HCT116 (cell line): ENCODE measurements at regions of chr4 and their contacts with region 1.

Region 1: GRCh38 chr4:108492816-108493595 is 127.4 kb upstream of the RPL34 start:
- DNase-seq: peak; percentile 21
- ATAC-seq: peak; percentile 100
- H3K4me3 ChIP-seq: no peak overlapping the region
- H3K27ac ChIP-seq: no peak overlapping the region
- H3K4me1 ChIP-seq: no peaks in the 10 kb centered on the region
- H3K27me3 ChIP-seq: no peaks in the 10 kb centered on the region
- CTCF ChIP-seq: peak; percentile 35 to 75 (median 73); a peak in 5 of 6 replicates
- POLR2A ChIP-seq: no peak
- RAD21 ChIP-seq: peak; percentile 69

Region 2: DNA sequence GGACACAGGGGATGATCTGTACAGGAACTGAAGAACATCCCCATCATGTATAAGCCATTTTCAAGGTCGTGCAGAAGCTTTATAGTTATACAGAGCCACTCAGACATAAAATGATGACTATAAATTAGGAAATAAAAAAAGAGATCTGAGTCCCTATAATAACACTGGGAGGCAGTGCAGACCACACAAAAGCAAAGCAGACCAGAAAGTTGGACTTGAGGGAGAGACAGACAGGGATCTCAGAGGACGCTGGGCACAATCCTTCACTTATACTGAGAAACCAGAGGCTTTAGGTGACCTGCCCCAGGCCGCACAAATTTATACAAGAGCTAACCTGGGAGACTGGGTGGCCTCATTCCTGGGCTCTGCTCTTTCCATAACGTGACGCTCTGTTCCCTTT is 432.8 kb before region 1 on chr4:
- CTCF ChIA-PET with region 1: interaction called, 3 read pairs
- POLR2A ChIA-PET with region 1: no interaction called
- RAD21 ChIA-PET with region 1: no interaction called
- intact Hi-C with region 1: loop called (anchors 1 kb)
- DNase-seq: peak; percentile 41
- ATAC-seq: peak; percentile 66
- H3K4me3 ChIP-seq: no peak overlapping the region
- H3K27ac ChIP-seq: no peak overlapping the region
- H3K4me1 ChIP-seq: peaks cover 0 to 22% of the 10 kb centered on the region in 2 experiments; a peak in 2 of 4 replicates
- H3K27me3 ChIP-seq: no peaks in the 10 kb centered on the region
- CTCF ChIP-seq: peak; percentile 32 to 57 (median 42); a peak in 4 of 6 replicates
- POLR2A ChIP-seq: no peak
- RAD21 ChIP-seq: peak; percentile 82

Region 3: DNA sequence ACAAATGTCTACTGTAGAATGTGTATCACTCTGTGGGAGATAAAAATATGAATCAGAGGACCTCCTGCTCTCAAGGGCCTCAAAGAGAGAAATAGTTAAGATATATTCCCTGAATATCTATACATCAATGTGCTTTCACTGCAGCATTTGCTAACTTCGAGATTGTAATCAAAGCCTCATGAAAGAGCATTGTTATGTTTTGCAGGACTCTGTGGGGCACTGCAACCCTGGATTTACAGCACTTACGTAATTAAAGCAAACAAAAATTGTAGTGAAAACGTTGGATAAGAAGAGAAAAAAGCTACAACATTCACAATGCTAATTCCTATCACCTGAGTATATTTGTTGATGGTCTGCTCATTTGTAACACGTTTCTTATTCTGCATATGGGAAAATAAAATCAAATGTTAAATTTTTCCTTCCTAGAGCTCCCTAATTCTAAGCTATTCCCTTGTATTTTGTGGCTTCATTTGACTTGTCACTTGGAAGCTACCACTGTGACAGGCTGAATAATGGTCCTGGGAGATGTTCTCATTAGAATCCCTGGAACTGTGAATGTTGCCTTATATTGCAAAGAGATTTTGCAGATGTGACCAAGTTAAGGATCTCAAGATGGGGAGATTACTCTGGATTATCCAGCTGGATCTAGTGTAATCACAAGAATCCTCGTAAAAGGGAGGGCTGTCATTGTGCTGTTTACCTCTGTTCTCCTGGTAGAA is 222.0 kb after region 1 on chr4:
- CTCF ChIA-PET with region 1: no interaction called
- POLR2A ChIA-PET with region 1: no interaction called
- RAD21 ChIA-PET with region 1: no interaction called
- intact Hi-C with region 1: no loop called
- DNase-seq: no peak
- ATAC-seq: no peak
- H3K4me3 ChIP-seq: no peak overlapping the region
- H3K27ac ChIP-seq: no peak overlapping the region
- H3K4me1 ChIP-seq: no peaks in the 10 kb centered on the region
- H3K27me3 ChIP-seq: no peaks in the 10 kb centered on the region
- CTCF ChIP-seq: no peak
- POLR2A ChIP-seq: no peak
- RAD21 ChIP-seq: no peak